CD4-positive, alpha-beta T cell (primary cell): ENCODE measurements at regions of chr3 and their contacts with region 1.

Region 1: DNA sequence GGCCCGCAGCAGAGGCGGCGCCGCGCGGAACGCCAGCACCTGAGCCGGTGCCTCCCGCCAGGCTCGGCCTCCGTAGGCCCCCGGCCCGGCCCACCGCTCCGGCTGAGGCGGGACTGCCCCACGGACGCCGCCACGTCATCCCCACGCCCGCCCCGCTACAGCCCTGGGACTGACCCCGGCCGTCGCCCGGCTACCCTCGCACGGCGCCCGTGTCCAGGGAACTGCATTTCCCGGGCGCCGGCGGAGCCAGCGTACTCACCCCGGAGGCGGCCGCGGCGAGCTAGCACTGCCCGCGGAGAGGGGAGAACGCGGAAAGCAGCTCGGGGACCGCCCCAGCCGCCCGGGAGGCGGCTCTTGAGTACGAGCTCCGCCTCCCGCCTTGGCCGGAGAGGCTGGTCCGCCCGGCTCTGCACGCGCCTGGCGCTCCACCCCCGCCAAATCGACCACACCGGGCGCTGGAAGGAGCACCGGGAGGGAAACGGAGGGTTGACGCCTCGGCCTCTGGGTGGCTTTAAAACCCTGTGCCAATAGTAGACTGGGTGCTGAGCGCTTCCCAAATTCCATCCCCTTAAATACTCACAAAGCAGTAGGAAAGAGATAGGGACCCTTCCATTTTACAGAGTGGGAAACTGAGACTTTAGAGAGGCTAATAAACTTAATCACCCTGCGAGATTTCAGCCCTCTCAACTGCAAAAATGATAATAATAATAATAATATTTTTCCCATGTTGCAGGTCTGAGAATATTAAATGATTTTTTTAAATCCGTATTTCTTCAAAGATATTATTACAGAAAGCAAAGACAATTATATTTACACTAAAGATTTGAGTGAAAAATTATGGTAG is at the start of gene B4GALT4:
- DNase-seq: peak; percentile 34 to 86 (median 60)
- ATAC-seq: peak; percentile 56
- H3K4me3 ChIP-seq: peak within 1 kb of the TSS; percentile 79
- H3K4me3 Mint-ChIP-seq: peak within 1 kb of the TSS; percentile 93
- H3K27ac ChIP-seq: peak within 1 kb of the TSS; percentile 81 to 86
- H3K27ac Mint-ChIP-seq: peak within 1 kb of the TSS; percentile 83
- H3K4me1 ChIP-seq: peaks cover 35% of the 10 kb centered on the region
- H3K4me1 Mint-ChIP-seq: peaks cover 46% of the 10 kb centered on the region
- H3K27me3 ChIP-seq: no peaks in the 10 kb centered on the region
- H3K27me3 Mint-ChIP-seq: no peaks in the 10 kb centered on the region
- CTCF ChIP-seq: no peak
- total RNA-seq, gene B4GALT4: 26.2 to 29.5 TPM

Region 2: GRCh38 chr3:119034256-119035013 is 206.4 kb before region 1 on chr3 and contains the start of gene IGSF11:
- CTCF ChIA-PET with region 1: no interaction called
- POLR2A ChIA-PET with region 1: interaction called, 9 read pairs
- intact Hi-C with region 1: loop called in 1 of 2 experiments (anchors 5 kb)
- DNase-seq: peak; percentile 42 to 81 (median 60)
- ATAC-seq: peak; percentile 92
- H3K4me3 ChIP-seq: peak within 1 kb of the TSS; percentile 64
- H3K4me3 Mint-ChIP-seq: peak within 1 kb of the TSS; percentile 91
- H3K27ac ChIP-seq: no peak within 1 kb of the TSS
- H3K27ac Mint-ChIP-seq: no peak within 1 kb of the TSS
- H3K4me1 ChIP-seq: peaks cover 11% of the 10 kb centered on the region
- H3K4me1 Mint-ChIP-seq: peaks cover 5% of the 10 kb centered on the region
- H3K27me3 ChIP-seq: peaks cover 9 to 27% of the 10 kb centered on the region in 2 experiments
- H3K27me3 Mint-ChIP-seq: peaks cover 49% of the 10 kb centered on the region
- CTCF ChIP-seq: peak; percentile 47
- total RNA-seq, gene IGSF11: 0.53 to 0.58 TPM

Region 3: DNA sequence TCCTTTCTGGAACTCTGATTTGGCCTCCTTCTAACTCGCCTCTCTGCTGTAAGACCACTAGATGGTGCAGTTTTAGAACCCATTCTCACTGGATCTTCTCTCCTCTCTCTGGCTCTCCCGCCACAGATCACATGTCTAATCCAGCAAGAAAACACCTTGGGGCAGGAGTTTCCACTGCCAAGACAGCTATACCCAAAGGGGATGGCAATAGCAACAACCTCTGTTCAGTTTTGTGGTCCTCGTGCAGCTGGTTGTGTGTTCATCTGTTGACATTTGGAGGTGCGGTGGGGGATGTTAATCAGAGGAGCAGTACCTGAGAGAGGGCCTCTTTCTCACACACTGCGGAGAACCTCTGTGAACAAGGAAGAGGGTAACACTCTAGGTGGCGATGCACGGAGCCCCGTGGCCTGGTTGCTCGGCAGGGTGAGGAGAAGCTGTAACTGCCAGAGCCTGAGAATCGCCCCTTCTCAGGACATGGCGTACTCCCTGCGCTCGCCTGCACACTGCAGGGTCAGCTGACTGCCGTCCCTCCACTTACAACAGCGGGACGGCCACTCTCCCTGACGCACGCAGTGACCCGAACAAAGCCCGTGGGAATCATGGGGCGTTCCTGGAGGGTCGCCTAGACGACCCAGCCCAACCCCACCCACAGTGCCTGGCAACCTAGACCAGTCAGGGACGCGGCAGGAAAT is 95.2 kb before region 1 on chr3 and contains the start of gene TEX55:
- CTCF ChIA-PET with region 1: interaction called, 7 read pairs
- POLR2A ChIA-PET with region 1: interaction called, 4 read pairs
- intact Hi-C with region 1: loop called (anchors 1 kb)
- DNase-seq: peak in 4 of 14 experiments; percentile 13 to 46 (median 34)
- ATAC-seq: peak; percentile 54
- H3K4me3 ChIP-seq: no peak within 1 kb of the TSS
- H3K4me3 Mint-ChIP-seq: no peak within 1 kb of the TSS
- H3K27ac ChIP-seq: no peak within 1 kb of the TSS
- H3K27ac Mint-ChIP-seq: no peak within 1 kb of the TSS
- H3K4me1 ChIP-seq: no peaks in the 10 kb centered on the region
- H3K4me1 Mint-ChIP-seq: no peaks in the 10 kb centered on the region
- H3K27me3 ChIP-seq: no peaks in the 10 kb centered on the region
- H3K27me3 Mint-ChIP-seq: no peaks in the 10 kb centered on the region
- CTCF ChIP-seq: peak; percentile 54
- total RNA-seq, gene TEX55: not detected

Region 4: DNA sequence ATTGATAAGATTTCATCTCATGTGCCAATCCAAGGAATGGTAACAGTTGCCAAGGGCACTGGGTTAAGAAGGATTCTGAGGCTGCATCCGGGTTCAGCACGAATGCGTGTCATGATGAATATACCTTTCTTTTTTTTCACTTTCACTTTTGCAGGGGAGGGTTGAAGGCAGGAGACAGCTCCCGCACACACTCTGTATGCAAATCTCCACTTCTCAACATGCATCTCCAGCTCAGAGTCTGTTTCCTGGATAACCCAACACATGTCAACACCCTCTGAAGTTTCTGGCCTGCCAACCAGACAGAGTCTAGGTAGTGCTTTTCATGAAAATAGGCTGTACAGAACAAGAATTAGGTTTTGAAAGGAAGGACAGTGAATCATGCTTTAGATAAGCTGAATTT is 21.7 kb before region 1 on chr3:
- CTCF ChIA-PET with region 1: interaction called, 11 read pairs
- POLR2A ChIA-PET with region 1: interaction called, 29 read pairs
- intact Hi-C with region 1: loop called in 1 of 2 experiments (anchors 1 kb)
- DNase-seq: peak in 9 of 14 experiments; percentile 14 to 71 (median 37)
- ATAC-seq: peak; percentile 99
- H3K4me3 ChIP-seq: no peak overlapping the region
- H3K4me3 Mint-ChIP-seq: peak overlapping the region; percentile 71
- H3K27ac ChIP-seq: peak overlapping the region; percentile 41 to 44
- H3K27ac Mint-ChIP-seq: peak overlapping the region; percentile 93
- H3K4me1 ChIP-seq: peaks cover 26% of the 10 kb centered on the region
- H3K4me1 Mint-ChIP-seq: peaks cover 68% of the 10 kb centered on the region
- H3K27me3 ChIP-seq: no peaks in the 10 kb centered on the region
- H3K27me3 Mint-ChIP-seq: no peaks in the 10 kb centered on the region
- CTCF ChIP-seq: no peak

Region 5: DNA sequence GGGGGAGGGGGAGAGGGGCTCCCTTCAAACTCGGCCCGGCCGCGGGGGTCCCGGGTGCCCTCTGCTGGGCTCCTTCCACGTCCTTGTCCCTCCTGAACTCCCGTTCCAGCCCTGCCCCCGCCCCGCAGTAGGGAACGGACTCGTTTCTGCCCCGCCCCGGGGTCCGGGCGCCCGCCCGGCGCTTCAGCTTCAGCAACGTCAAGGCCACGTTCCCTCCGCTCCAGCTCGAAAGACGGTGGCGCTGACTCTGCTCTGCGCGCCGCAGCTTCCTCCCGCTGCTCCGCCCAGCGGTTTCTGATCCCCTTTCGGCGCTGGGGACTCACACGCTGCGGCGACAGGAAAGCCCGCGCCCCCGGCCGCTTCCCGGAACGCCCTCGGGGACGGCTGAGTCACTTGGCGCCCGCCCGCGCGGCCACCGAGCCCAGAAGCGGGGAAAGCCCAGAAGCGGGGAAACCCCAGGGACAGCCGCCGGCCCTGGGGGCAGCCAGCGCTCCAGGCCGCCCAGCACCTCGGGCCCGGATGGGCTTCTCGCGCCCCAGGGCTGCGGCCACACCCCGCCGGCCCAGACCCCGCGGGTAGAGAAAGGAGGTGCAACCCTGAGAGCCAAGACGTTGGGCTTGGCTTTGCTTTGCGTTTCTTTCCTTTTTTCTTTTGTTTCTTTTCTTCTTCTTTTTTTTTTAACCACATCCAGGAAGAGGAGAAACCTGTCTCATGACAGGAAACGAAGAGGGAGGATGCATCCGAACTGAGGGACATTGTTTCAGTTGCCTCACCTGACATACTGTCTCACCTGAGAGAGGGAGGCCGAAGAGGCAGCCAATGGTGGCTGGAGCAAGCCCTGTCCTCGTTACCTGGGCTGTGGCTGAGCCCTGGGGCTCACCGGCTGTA is 82.3 kb after region 1 on chr3:
- CTCF ChIA-PET with region 1: no interaction called
- POLR2A ChIA-PET with region 1: interaction called, 15 read pairs
- intact Hi-C with region 1: no loop called
- DNase-seq: peak; percentile 70 to 97 (median 84)
- ATAC-seq: peak; percentile 86
- H3K4me3 ChIP-seq: peak overlapping the region; percentile 79
- H3K4me3 Mint-ChIP-seq: peak overlapping the region; percentile 89
- H3K27ac ChIP-seq: peak overlapping the region; percentile 81 to 90
- H3K27ac Mint-ChIP-seq: peak overlapping the region; percentile 96
- H3K4me1 ChIP-seq: peaks cover 23% of the 10 kb centered on the region
- H3K4me1 Mint-ChIP-seq: peaks cover 32% of the 10 kb centered on the region
- H3K27me3 ChIP-seq: no peaks in the 10 kb centered on the region
- H3K27me3 Mint-ChIP-seq: no peaks in the 10 kb centered on the region
- CTCF ChIP-seq: no peak

Region 6: DNA sequence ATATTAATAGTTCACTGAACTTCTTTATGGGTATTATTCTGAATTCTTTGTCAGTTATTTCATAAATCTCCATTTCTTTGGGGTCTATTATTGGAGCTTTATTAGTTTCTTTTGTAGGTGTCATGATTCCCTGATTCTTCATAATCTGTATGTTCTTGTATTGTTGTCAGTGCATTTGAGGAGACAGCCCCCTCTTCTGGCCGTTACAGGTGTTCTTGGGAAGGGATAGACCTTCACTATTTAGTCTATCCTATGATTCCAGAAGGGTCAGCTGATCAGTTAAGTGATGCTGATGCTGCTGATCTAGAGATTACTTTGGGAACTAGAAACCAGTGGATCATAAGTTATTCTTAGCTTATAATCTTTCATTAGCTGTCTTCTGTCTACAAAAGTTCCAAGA is 187.7 kb after region 1 on chr3:
- CTCF ChIA-PET with region 1: no interaction called
- POLR2A ChIA-PET with region 1: no interaction called
- intact Hi-C with region 1: no loop called
- DNase-seq: no peak
- ATAC-seq: no peak
- H3K4me3 ChIP-seq: no peak overlapping the region
- H3K4me3 Mint-ChIP-seq: no peak overlapping the region
- H3K27ac ChIP-seq: no peak overlapping the region
- H3K27ac Mint-ChIP-seq: no peak overlapping the region
- H3K4me1 ChIP-seq: no peaks in the 10 kb centered on the region
- H3K4me1 Mint-ChIP-seq: no peaks in the 10 kb centered on the region
- H3K27me3 ChIP-seq: no peaks in the 10 kb centered on the region
- H3K27me3 Mint-ChIP-seq: no peaks in the 10 kb centered on the region
- CTCF ChIP-seq: no peak

Region 7: GRCh38 chr3:119444590-119444989 is 203.8 kb after region 1 on chr3:
- CTCF ChIA-PET with region 1: no interaction called
- POLR2A ChIA-PET with region 1: no interaction called
- intact Hi-C with region 1: no loop called
- DNase-seq: no peak
- ATAC-seq: no peak
- H3K4me3 ChIP-seq: no peak overlapping the region
- H3K4me3 Mint-ChIP-seq: no peak overlapping the region
- H3K27ac ChIP-seq: no peak overlapping the region
- H3K27ac Mint-ChIP-seq: no peak overlapping the region
- H3K4me1 ChIP-seq: no peaks in the 10 kb centered on the region
- H3K4me1 Mint-ChIP-seq: no peaks in the 10 kb centered on the region
- H3K27me3 ChIP-seq: no peaks in the 10 kb centered on the region
- H3K27me3 Mint-ChIP-seq: no peaks in the 10 kb centered on the region
- CTCF ChIP-seq: no peak

Region 8: DNA sequence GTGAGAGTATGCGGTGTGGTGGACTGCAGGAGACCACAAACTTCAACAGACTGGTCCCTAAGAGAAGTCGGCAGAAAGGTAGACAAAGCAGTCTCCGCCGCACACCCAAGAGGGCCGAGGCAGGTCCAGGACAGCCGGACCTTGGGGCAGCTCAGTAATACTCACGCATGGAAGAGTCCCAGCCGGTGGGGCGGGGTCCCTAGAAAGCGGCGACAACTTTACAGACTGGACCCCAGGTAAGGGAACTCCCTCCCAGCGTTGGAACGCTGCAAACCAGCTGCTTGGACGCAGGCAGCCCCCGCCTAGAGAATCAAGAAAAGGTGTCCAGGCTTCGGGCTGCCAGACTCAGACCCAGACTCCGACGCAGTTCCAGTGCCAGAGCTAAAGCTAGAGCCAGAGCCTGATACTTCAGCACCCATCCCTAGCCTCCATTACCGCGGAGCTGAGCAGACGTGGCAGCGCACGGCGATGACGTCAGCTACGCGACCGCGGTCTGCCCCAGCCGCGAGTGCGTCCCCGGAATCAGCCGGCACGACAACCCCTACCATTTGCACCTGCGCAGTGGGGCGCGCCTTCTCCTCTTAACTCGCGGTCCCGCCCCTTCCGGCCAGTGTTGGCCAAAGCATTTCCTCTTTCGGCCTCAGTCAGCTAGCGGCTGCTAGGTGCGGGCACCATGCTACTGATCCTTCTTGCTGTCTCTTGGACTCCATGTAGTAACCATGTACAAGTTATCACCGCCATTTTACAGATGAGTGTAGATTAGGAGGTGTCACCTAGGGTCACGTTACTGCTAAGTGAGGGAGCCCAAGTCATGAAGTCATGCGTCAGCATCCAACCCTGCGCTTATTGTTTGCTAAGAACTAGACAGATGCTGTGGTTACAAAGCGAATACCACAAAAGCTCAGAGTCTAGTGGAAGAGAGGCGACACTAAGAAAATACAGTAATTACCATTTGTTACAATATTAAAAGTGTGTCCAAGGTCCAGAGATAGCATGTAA is 222.7 kb after region 1 on chr3 and contains the start of gene TMEM39A:
- CTCF ChIA-PET with region 1: no interaction called
- POLR2A ChIA-PET with region 1: interaction called, 8 read pairs
- intact Hi-C with region 1: loop called in 1 of 2 experiments (anchors 2 kb)
- DNase-seq: peak; percentile 97 to 100 (median 98)
- ATAC-seq: peak; percentile 87
- H3K4me3 ChIP-seq: peak within 1 kb of the TSS; percentile 90
- H3K4me3 Mint-ChIP-seq: peak within 1 kb of the TSS; percentile 93
- H3K27ac ChIP-seq: peak within 1 kb of the TSS; percentile 87 to 93
- H3K27ac Mint-ChIP-seq: peak within 1 kb of the TSS; percentile 97
- H3K4me1 ChIP-seq: peaks cover 28% of the 10 kb centered on the region
- H3K4me1 Mint-ChIP-seq: peaks cover 37% of the 10 kb centered on the region
- H3K27me3 ChIP-seq: no peaks in the 10 kb centered on the region
- H3K27me3 Mint-ChIP-seq: peaks cover 4% of the 10 kb centered on the region
- CTCF ChIP-seq: no peak
- total RNA-seq, gene TMEM39A: 54.1 to 58.0 TPM